ENCODE measurements at regions of chr1 and their contacts with region 1.

Region 1: GRCh38 chr1:58546520-58547308 is at the start of gene OMA1:
- DNase-seq: peak; percentile 97
- H3K4me3 Mint-ChIP-seq: peak within 1 kb of the TSS; percentile 91
- H3K27ac Mint-ChIP-seq: peak within 1 kb of the TSS; percentile 95
- H3K4me1 Mint-ChIP-seq: peaks cover 19% of the 10 kb centered on the region
- H3K27me3 Mint-ChIP-seq: peaks cover 15% of the 10 kb centered on the region
- total RNA-seq, gene OMA1: 12.9 and 13.0 TPM in 2 replicates

Region 2: DNA sequence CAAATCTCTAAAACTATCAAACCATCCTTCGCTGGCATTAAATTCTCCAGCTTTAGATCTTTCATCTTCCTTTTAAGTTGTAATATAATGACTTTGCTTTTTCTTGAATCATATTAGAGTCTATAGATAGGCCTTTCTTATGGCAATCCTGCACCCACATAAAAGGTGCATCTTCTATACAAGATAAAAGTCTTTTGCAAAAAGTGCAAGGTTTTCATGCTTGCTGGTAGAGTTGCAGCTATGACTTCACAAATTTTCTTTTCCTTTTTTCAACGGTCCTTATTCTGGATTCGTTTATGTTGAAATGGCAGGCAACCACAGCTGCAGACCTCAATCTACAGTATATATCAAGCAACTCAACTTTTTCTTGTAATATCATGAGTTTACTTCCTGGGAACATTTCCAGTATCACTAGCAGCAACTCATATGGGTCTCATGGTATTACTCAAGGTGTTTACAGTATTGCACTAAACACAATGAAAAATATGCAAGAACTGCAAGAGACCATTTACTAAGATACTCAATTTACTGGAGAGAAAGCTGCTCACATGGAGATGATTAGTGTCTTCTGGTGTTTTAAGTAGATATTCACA is 22.3 kb before region 1 on chr1:
- intact Hi-C with region 1: loop called (anchors 1 kb)
- DNase-seq: no peak
- H3K4me3 Mint-ChIP-seq: no peak overlapping the region
- H3K27ac Mint-ChIP-seq: no peak overlapping the region
- H3K4me1 Mint-ChIP-seq: peaks cover 9% of the 10 kb centered on the region
- H3K27me3 Mint-ChIP-seq: no peaks in the 10 kb centered on the region

Region 3: DNA sequence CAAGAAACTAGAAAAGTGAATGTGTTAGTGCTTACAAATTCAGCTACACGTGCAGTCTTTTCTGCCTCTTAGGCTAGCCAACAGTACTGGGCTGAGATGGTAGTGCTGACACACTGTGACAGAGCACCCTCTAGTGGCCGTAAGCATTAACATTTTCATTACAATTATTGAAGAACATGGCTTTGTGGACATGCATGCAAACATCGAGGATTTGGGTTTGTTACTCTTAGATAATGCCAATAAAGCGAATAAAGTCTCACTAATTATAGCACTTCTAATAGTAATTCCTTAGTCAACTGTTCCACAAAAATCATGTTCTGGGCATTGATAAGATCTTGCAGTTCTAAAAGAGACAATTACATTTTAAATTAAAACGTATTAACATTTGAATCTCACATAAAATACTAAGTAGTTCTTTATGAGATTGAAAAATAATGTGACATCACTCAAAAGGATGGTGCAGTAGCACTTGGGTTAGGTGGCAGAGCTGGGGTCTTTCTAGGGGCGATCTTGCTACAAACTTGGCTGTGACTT is 106.0 kb after region 1 on chr1:
- intact Hi-C with region 1: loop called (anchors 1 kb)
- DNase-seq: peak; percentile 43
- H3K4me3 Mint-ChIP-seq: no peak overlapping the region
- H3K27ac Mint-ChIP-seq: no peak overlapping the region
- H3K4me1 Mint-ChIP-seq: peaks cover 7% of the 10 kb centered on the region
- H3K27me3 Mint-ChIP-seq: no peaks in the 10 kb centered on the region

Region 4: DNA sequence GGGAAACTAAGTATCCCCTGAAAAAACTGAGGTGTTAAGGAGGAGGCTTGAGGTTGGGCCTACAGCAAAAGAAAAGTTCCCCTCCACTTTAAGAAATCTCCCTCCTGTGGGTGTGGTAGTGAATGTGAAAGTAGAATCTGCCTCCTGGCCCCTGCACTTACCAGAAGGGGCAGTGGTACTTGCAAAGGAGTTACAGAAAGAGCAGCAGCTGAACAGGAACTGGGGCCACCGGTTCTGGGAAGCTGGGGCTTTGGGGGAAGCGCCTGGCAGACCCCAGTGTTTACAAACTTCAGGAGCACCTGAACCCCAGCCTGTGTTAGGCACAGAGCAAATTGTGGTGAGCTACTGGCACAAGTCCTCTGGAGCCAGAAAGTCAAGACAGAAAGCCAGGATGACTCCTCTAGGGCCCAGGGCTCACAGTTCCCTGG is 500.0 kb after region 1 on chr1:
- intact Hi-C with region 1: loop called (anchors 10 kb)
- DNase-seq: peak; percentile 62
- H3K4me3 Mint-ChIP-seq: peak overlapping the region; percentile 67
- H3K27ac Mint-ChIP-seq: peak overlapping the region; percentile 71
- H3K4me1 Mint-ChIP-seq: peaks cover 77% of the 10 kb centered on the region
- H3K27me3 Mint-ChIP-seq: no peaks in the 10 kb centered on the region

Region 5: GRCh38 chr1:59759156-59759925 is 1212.6 kb after region 1 on chr1:
- intact Hi-C with region 1: loop called (anchors 1 kb)
- DNase-seq: peak; percentile 63
- H3K4me3 Mint-ChIP-seq: peak overlapping the region; percentile 13
- H3K27ac Mint-ChIP-seq: no peak overlapping the region
- H3K4me1 Mint-ChIP-seq: peaks cover 12% of the 10 kb centered on the region
- H3K27me3 Mint-ChIP-seq: no peaks in the 10 kb centered on the region

Measured in activated T-helper 1 cell treated with anti-CD3 and anti-CD28 coated beads, Interleukin-12 subunit alpha, Interleukin-12 subunit beta, Interleukin-2, Interleukin-4 antibody, amounts not matched to agents 30 ng/mL and 10 ng/mL and 1 ng/mL, durations not matched to agents 14 hours and 24 hours and 36 hours (primary cell).